Activated B cell treated with CpG ODN at 0.5 μM for 24 hours (primary cell): ENCODE measurements at regions of chr7 and their contacts with region 1.

Region 1: GRCh38 chr7:53325106-53325505 is 289.7 kb downstream of the POM121L12 start:
- DNase-seq: no peak
- ATAC-seq: no peak
- H3K4me3 Mint-ChIP-seq: no peak overlapping the region
- H3K27ac Mint-ChIP-seq: no peak overlapping the region
- H3K4me1 Mint-ChIP-seq: no peaks in the 10 kb centered on the region
- H3K27me3 Mint-ChIP-seq: no peaks in the 10 kb centered on the region
- CTCF ChIP-seq: no peak

Region 2: DNA sequence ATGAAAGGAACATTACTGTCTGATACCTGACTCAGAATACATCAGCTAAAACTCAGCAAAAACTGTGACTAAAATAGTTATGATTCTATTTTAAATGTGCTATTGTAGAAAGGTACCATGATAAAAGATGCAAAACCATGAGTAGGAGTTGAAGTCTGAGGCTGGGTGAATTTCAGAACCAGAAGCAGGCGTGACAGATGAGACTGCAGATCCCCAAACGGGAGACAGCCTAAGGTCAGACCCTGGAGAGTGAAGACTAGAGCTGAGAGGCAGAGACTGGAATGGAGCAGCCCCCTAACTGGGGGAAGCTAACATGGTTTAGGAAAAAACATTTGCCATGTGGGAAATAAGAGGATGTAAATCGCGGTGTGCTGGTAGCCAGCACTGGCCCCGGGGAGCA is 13.9 kb before region 1 on chr7:
- CTCF ChIA-PET with region 1: no interaction called
- POLR2A ChIA-PET with region 1: no interaction called
- intact Hi-C with region 1: no loop called
- DNase-seq: no peak
- ATAC-seq: no peak
- H3K4me3 Mint-ChIP-seq: no peak overlapping the region
- H3K27ac Mint-ChIP-seq: no peak overlapping the region
- H3K4me1 Mint-ChIP-seq: no peaks in the 10 kb centered on the region
- H3K27me3 Mint-ChIP-seq: no peaks in the 10 kb centered on the region
- CTCF ChIP-seq: no peak

Region 3: GRCh38 chr7:53383131-53383530 is 58.0 kb after region 1 on chr7:
- CTCF ChIA-PET with region 1: no interaction called
- POLR2A ChIA-PET with region 1: no interaction called
- intact Hi-C with region 1: loop called (anchors 10 kb)
- DNase-seq: no peak
- ATAC-seq: no peak
- H3K4me3 Mint-ChIP-seq: no peak overlapping the region
- H3K27ac Mint-ChIP-seq: no peak overlapping the region
- H3K4me1 Mint-ChIP-seq: no peaks in the 10 kb centered on the region
- H3K27me3 Mint-ChIP-seq: no peaks in the 10 kb centered on the region
- CTCF ChIP-seq: no peak